ENCODE measurements at regions of chr4 and their contacts with region 1.

Region 1: GRCh38 chr4:10018818-10019461 is 2.4 kb downstream of the SLC2A9 start:
- DNase-seq: peak; percentile 94 to 95
- H3K4me3 ChIP-seq: peak overlapping the region; percentile 36 to 65 (median 50)
- H3K27ac ChIP-seq: peak overlapping the region; percentile 87 to 89
- H3K4me1 ChIP-seq: peaks cover 0 to 6% of the 10 kb centered on the region in 2 donors
- H3K27me3 ChIP-seq: no peaks in the 10 kb centered on the region
- CTCF ChIP-seq: peak; percentile 85 to 99 (median 99)
- POLR2A ChIP-seq: no peak

Region 2: GRCh38 chr4:9762823-9763475 is 256.0 kb before region 1 on chr4:
- intact Hi-C with region 1: loop called (anchors 10 kb)
- DNase-seq: peak in 1 of 2 donors; percentile 61
- H3K4me3 ChIP-seq: no peak overlapping the region
- H3K27ac ChIP-seq: no peak overlapping the region
- H3K4me1 ChIP-seq: no peaks in the 10 kb centered on the region
- H3K27me3 ChIP-seq: no peaks in the 10 kb centered on the region
- CTCF ChIP-seq: peak in 2 of 3 donors; percentile 70
- POLR2A ChIP-seq: no peak

Measured in breast epithelium (tissue), 4 donors.